ENCODE measurements at regions of chr20 and their contacts with region 1.

Region 1: DNA sequence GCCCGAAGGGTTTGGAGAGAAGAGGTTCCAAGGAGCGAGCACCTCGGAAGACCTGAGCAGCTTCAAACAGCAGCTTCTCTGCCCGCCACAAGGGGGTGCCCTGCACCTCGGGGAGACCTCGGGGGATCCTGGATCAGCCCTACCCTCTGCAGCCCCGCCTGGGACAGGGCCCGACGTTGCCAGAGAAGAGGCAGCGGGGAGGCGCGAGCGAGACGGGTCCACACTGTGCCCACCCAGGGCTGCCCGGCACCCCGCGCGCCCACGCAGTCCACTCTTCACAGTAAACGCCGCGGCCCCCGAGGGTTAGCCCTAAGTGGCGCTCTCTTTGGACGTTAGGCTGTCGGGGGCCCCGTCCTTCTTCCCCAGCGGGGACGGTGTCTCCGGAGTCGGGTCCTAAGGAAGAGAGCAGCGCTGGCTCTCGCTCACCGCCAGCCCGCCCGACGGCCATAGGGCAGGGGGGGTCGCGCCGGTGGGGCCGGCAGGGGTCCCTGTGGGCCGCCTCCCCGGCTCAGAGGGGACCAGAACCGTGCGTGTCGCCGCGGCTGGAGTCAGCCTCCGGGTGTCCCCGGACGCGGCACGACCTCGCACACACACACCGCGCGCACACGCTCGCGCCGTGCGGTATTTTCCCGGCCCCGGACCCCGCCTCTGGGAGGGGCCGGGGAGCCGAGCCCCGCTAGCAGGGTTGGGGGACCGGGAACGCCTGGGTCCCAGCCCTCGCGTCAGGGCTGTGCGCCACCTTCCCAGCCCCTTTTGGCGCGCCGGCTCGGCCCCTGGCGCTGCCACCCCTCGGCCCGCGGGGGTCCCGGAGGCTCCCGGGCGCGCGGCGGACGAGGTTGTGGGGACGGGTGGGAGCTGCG is 929 bp downstream of the CDH22 start:
- DNase-seq: peak; percentile 73
- ATAC-seq: peak; percentile 88
- H3K4me3 Mint-ChIP-seq: no peak overlapping the region
- H3K27ac Mint-ChIP-seq: no peak overlapping the region
- H3K4me1 Mint-ChIP-seq: peaks cover 4% of the 10 kb centered on the region
- H3K27me3 Mint-ChIP-seq: peaks cover 50% of the 10 kb centered on the region
- CTCF ChIP-seq: peak; percentile 85

Region 2: DNA sequence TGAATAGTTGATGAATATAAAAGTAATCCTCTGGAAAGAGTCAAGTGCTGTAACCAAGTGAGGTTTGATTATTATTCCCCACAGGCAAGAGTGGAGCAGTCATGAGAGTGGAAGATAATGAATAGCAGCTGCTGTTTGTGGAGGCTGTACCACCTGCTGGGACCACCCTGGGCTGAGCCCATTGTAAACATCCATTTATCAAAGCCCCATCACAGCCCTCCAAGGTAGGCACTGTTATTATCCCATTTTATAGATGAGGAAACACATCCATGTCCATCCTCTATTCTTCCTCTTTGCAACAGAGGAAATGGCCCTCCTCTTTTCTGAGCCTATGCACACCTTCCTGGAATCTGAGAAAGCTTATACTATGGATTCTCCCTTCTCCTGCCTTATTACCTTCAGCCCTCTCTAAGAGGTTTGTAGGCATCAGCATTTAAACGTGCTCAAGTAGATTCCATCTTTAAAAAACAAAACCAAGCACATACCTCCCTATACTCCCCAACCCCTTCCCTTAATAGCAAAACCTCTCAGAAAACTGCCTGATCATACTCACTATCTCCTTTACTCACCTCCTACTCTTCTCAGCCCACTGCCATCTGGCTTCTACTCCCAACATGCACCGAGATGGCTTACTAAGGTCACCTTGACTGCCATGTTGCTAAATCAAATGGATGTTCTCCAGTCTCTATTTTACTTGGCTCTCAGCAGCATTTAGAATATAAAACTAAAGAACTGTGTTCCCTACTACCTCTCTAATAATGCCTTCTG is 36.2 kb before region 1 on chr20:
- CTCF ChIA-PET with region 1: no interaction called
- POLR2A ChIA-PET with region 1: no interaction called
- intact Hi-C with region 1: no loop called
- DNase-seq: no peak
- ATAC-seq: no peak
- H3K4me3 Mint-ChIP-seq: no peak overlapping the region
- H3K27ac Mint-ChIP-seq: no peak overlapping the region
- H3K4me1 Mint-ChIP-seq: no peaks in the 10 kb centered on the region
- H3K27me3 Mint-ChIP-seq: peaks cover 39% of the 10 kb centered on the region
- CTCF ChIP-seq: no peak

Region 3: GRCh38 chr20:46289432-46289831 is 17.9 kb before region 1 on chr20:
- CTCF ChIA-PET with region 1: no interaction called
- POLR2A ChIA-PET with region 1: no interaction called
- intact Hi-C with region 1: no loop called
- DNase-seq: no peak
- ATAC-seq: no peak
- H3K4me3 Mint-ChIP-seq: no peak overlapping the region
- H3K27ac Mint-ChIP-seq: no peak overlapping the region
- H3K4me1 Mint-ChIP-seq: no peaks in the 10 kb centered on the region
- H3K27me3 Mint-ChIP-seq: peaks cover 18% of the 10 kb centered on the region
- CTCF ChIP-seq: no peak

Region 4: DNA sequence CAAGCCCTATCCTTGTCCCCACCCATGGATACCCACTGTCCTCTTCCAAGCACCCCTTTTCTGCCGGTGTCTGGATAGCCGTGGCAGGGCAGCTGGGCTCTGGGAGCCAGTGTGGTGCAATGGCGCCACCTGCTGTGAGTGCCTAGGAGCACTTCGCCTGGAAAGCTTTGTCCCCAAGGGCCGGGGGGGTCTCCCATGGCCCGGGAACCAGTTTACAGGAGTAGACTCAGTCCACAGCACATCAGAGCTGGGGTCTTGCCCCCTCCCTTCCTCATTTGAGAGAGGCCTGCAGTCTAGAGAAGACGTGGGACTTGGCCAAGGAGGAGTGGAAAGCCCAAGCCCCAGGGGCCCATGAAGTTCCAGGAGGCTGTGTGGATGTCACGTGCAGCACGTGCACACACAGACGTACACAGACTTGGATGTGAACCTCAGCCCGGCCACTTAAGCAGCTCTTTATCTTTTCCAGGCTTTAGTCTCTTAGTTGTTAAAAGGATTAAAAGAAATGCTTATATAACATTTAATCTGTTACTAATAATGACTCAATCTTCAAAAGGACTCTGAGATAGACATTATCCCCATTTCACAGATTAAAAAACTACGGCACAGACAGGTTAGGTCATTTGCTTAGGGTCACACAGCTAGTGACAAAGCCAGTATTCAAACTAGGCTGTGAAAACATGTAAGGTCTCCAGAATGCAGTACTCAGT is 41.8 kb after region 1 on chr20:
- CTCF ChIA-PET with region 1: interaction called, 44 read pairs
- POLR2A ChIA-PET with region 1: no interaction called
- intact Hi-C with region 1: no loop called
- DNase-seq: peak; percentile 64
- ATAC-seq: peak; percentile 68
- H3K4me3 Mint-ChIP-seq: no peak overlapping the region
- H3K27ac Mint-ChIP-seq: no peak overlapping the region
- H3K4me1 Mint-ChIP-seq: peaks cover 17% of the 10 kb centered on the region
- H3K27me3 Mint-ChIP-seq: no peaks in the 10 kb centered on the region
- CTCF ChIP-seq: peak; percentile 78

Measured in activated CD8-positive, alpha-beta T cell treated with anti-CD3 and anti-CD28 coated beads for 36 hours (primary cell).